ENCODE measurements at regions of chr4 and their contacts with region 1.

Region 1: DNA sequence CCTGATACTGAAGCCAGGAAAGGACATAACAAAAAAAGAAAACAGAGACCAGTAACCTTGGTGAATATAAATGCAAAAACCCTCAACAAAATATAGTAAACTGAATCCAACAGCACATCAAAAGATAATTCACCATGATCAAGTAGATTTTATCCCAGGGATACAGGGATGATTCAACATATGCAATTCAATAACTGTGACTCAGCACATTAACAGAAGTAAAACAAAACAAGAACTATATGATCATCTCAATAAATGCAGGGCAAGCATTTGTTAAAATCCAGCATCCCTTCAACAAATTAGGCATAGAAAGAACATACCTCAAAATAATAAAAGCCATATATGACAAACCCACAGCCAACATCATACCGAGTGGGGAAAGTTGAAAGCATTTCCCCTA is 112.0 kb downstream of the HHIP start:
- DNase-seq: no peak
- H3K4me3 ChIP-seq: no peak overlapping the region
- H3K27ac ChIP-seq: no peak overlapping the region
- H3K4me1 ChIP-seq: no peaks in the 10 kb centered on the region
- H3K27me3 ChIP-seq: no peaks in the 10 kb centered on the region
- CTCF ChIP-seq: no peak
- EP300 ChIP-seq: no peak
- POLR2A ChIP-seq: no peak

Region 2: GRCh38 chr4:144316869-144317268 is 441.1 kb before region 1 on chr4:
- intact Hi-C with region 1: no loop called
- DNase-seq: no peak
- H3K4me3 ChIP-seq: no peak overlapping the region
- H3K27ac ChIP-seq: no peak overlapping the region
- H3K4me1 ChIP-seq: no peaks in the 10 kb centered on the region
- H3K27me3 ChIP-seq: no peaks in the 10 kb centered on the region
- CTCF ChIP-seq: no peak
- EP300 ChIP-seq: no peak
- POLR2A ChIP-seq: no peak

Region 3: DNA sequence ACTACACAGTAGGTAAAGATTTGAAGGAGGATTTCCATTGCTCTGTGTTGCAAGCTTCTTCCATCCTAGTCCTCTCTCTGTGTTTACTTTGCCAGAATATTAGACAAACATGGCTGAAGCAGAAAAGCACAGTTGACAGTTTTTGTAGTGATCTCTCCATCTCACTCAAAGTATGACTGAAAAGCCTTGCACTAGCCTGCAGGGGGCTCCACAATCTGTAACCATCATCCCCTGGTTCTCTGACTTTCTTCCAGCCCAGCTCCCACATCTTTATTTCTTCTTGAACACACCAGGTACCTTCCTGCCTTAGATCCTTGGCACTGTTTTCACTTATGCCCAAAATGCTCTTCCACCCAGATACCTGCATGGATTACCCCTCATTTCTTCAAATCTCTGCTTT is 146.1 kb before region 1 on chr4:
- intact Hi-C with region 1: no loop called
- DNase-seq: no peak
- H3K4me3 ChIP-seq: no peak overlapping the region
- H3K27ac ChIP-seq: no peak overlapping the region
- H3K4me1 ChIP-seq: no peaks in the 10 kb centered on the region
- H3K27me3 ChIP-seq: no peaks in the 10 kb centered on the region
- CTCF ChIP-seq: no peak
- EP300 ChIP-seq: no peak
- POLR2A ChIP-seq: no peak

Region 4: DNA sequence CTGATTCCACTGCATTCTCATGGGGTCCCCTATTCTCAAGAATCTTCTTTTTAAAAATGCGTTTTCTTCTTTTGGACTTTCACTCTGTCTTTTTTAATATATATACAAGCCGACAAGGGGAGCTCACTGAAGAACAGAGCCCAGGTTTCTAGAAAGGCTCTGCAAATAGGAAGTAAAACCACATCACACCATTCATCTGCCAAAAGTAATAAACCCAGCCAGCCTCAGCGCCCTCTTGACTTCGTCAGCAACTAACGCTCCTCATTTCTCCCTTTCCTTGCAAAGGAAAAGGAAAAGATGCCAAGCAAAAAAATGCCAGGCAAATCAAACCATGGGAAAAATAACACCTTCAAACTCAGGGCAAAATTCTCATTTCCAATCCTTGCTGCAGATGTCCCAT is 24.4 kb after region 1 on chr4:
- intact Hi-C with region 1: loop called in 1 of 4 experiments (anchors 2 kb)
- DNase-seq: no peak
- H3K4me3 ChIP-seq: no peak overlapping the region
- H3K27ac ChIP-seq: no peak overlapping the region
- H3K4me1 ChIP-seq: no peaks in the 10 kb centered on the region
- H3K27me3 ChIP-seq: no peaks in the 10 kb centered on the region
- CTCF ChIP-seq: no peak
- EP300 ChIP-seq: no peak
- POLR2A ChIP-seq: no peak